ENCODE measurements at regions of chr18 and their contacts with region 1.

Region 1: DNA sequence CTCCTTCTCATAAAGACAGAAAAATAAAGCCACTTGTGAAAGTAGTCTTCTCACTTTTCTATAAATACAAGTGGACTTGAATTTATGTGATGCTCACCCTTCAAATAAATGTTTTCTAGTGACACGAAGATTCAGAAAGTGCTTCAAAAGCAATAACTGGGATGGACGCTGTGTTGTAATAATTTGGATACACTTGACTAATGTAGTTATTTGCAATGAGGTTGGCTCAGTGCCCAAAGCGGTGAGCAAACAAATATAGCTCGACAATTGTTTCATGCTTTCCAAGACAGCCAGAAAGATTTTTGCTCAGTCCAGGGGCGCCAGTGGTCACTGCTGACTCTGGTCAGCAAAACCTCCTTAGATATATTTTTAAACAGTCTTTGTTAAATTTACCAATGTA is 278.6 kb upstream of the KLHL14 start:
- DNase-seq: no peak
- ATAC-seq: no peak
- H3K4me3 ChIP-seq: no peak overlapping the region
- H3K27ac ChIP-seq: no peak overlapping the region
- H3K4me1 ChIP-seq: no peaks in the 10 kb centered on the region
- H3K27me3 ChIP-seq: no peaks in the 10 kb centered on the region
- CTCF ChIP-seq: no peak
- POLR2A ChIP-seq: no peak

Region 2: GRCh38 chr18:32974421-32975162 is 76.8 kb before region 1 on chr18:
- in situ Hi-C with region 1: loop called in 1 of 4 experiments (anchors 25 kb)
- intact Hi-C with region 1: no loop called
- DNase-seq: no peak
- ATAC-seq: no peak
- H3K4me3 ChIP-seq: no peak overlapping the region
- H3K27ac ChIP-seq: no peak overlapping the region
- H3K4me1 ChIP-seq: no peaks in the 10 kb centered on the region
- H3K27me3 ChIP-seq: no peaks in the 10 kb centered on the region
- CTCF ChIP-seq: no peak
- POLR2A ChIP-seq: no peak